ENCODE measurements at regions of chr1 and their contacts with region 1.

Region 1: DNA sequence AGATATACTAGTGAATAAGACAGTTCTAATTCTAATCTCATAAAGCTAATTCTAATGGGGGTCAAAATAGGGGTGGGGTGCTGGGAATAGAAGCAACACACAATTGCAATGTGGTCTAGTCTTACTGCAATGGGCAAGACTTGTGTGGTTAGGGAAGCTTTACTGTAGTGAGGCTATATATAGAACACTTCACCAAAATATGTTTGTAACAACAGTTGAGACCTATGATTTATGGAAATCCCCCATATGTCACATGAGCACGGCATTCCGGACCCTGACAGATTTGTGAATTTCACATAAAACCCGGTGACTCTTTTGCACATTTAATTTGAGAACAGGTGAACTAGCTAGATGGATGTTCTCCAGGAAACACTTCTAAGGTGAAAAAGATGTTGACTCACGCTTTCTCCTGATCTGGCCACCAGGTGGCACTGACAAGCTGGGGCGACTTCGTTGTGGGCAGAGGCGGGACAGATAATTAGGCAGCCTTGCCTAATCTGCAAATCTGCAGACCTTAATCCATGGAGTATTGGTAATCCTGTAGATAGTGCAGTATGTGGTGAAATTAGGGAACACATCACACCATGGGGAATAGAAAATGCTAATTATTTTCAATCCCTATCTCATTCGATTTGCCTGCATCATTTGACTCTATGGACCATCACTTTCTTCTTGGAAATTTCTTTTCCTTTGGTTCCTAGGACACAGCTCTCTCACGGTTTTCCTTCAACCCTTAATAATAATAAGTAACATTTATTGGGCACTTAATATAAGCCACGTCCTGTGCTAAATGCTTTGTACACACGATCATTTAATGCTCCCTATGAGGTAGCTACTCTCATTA is 37.7 kb downstream of the KIAA0040 start:
- DNase-seq: peak; percentile 24
- ATAC-seq: peak; percentile 49
- H3K4me3 ChIP-seq: no peak overlapping the region
- H3K27ac ChIP-seq: no peak overlapping the region
- H3K4me1 ChIP-seq: no peaks in the 10 kb centered on the region
- H3K27me3 ChIP-seq: peaks cover 0 to 3% of the 10 kb centered on the region in 2 experiments; a peak in 1 of 5 replicates
- CTCF ChIP-seq: peak; percentile 82
- EP300 ChIP-seq: no peak
- POLR2A ChIP-seq: no peak
- RAD21 ChIP-seq: peak; percentile 55; the same call in 1 of the 2 replicates

Region 2: GRCh38 chr1:175192630-175193526 is 38.0 kb after region 1 on chr1 and contains the start of gene KIAA0040:
- CTCF ChIA-PET with region 1: no interaction called
- POLR2A ChIA-PET with region 1: no interaction called
- in situ Hi-C with region 1: no loop called
- intact Hi-C with region 1: loop called (anchors 5 kb)
- DNase-seq: peak; percentile 65
- ATAC-seq: peak; percentile 93
- H3K4me3 ChIP-seq: peak within 1 kb of the TSS; percentile 46 to 66 (median 59); a peak in 5 of 6 replicates
- H3K27ac ChIP-seq: no peak within 1 kb of the TSS
- H3K4me1 ChIP-seq: peaks cover 21% of the 10 kb centered on the region
- H3K27me3 ChIP-seq: peaks cover 0 to 9% of the 10 kb centered on the region in 2 experiments; a peak in 2 of 5 replicates
- CTCF ChIP-seq: peak; percentile 30
- EP300 ChIP-seq: no peak
- POLR2A ChIP-seq: no peak
- RAD21 ChIP-seq: no peak
- total RNA-seq, gene KIAA0040: 0.24 and 0.63 TPM in 2 replicates

Region 3: DNA sequence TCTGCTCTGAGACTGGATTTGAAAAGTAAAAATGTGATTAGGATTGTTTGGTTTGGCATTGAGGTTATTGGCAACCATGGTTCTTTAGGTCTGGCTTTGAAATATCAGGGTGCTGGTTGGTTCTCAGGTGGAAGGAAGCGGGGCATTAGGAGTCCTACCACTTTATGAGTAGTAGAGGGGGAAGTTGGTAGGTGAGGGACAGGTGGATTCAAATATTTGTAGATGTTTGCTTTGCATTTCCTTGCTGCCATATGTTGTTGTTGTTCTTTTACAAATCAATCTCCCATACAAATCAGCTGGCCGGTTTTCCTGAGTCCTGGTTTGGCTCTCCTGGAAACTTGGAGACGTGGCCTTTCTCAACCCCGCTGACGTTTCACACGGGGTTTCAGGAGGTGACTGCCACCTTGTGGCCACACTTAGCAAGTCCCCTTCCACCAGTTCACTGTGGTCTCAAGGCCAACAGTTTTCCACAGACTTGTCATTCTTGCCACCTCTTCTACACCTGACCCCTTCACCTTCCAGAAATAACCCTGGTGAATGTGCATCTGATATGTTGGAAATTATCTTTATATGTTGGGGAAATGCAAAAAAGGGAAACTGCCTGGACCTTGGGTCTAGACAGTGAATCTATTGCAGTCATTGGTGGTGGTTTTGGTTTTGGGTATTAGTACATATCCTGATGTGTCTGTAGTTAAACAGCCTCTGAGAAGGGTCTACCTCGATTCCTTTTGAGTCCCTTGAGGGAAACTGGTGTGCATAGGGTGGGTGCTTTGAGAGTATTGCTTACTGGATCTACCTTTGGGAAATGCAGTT is 164.8 kb after region 1 on chr1:
- CTCF ChIA-PET with region 1: interaction called, 47 read pairs
- POLR2A ChIA-PET with region 1: no interaction called
- in situ Hi-C with region 1: loop called (anchors 5 kb)
- intact Hi-C with region 1: loop called (anchors 1 kb)
- DNase-seq: peak; percentile 52
- ATAC-seq: peak; percentile 95
- H3K4me3 ChIP-seq: no peak overlapping the region
- H3K27ac ChIP-seq: no peak overlapping the region
- H3K4me1 ChIP-seq: no peaks in the 10 kb centered on the region
- H3K27me3 ChIP-seq: peaks cover 1 to 7% of the 10 kb centered on the region in 2 experiments; a peak in 2 of 5 replicates
- CTCF ChIP-seq: peak; percentile 89
- EP300 ChIP-seq: no peak
- POLR2A ChIP-seq: no peak
- RAD21 ChIP-seq: peak; percentile 73

Region 4: GRCh38 chr1:175514387-175514953 is 359.6 kb after region 1 on chr1:
- CTCF ChIA-PET with region 1: no interaction called
- POLR2A ChIA-PET with region 1: no interaction called
- in situ Hi-C with region 1: no loop called
- intact Hi-C with region 1: no loop called
- DNase-seq: no peak
- ATAC-seq: no peak
- H3K4me3 ChIP-seq: no peak overlapping the region
- H3K27ac ChIP-seq: no peak overlapping the region
- H3K4me1 ChIP-seq: no peaks in the 10 kb centered on the region
- H3K27me3 ChIP-seq: no peaks in the 10 kb centered on the region
- CTCF ChIP-seq: no peak
- EP300 ChIP-seq: no peak
- POLR2A ChIP-seq: no peak
- RAD21 ChIP-seq: no peak

Region 5: DNA sequence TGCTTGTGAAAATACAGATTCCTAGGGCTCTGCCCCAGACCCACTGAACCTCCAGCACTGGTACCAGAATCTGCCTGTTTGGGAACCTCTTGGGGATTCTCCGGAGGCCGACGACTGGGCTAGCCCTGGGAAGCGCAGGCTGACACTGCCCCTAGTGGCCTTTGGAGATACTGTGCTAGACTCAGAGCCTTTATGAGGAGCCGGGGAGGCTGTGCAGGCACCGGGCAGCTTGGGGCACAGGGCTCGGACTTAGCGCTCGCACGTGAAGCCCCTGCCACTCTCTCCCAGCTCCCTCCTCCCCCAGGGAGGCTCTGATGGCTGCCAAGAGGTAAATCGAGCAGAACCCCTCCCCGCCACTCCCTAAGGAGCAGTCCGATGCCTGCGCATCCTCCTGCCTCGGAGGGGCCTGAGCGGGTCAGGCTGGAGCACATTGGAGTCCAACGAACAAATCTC is 733.2 kb after region 1 on chr1:
- CTCF ChIA-PET with region 1: interaction called, 3 read pairs
- POLR2A ChIA-PET with region 1: no interaction called
- in situ Hi-C with region 1: loop called (anchors 25 kb)
- intact Hi-C with region 1: no loop called
- DNase-seq: peak; percentile 45
- ATAC-seq: peak; percentile 99
- H3K4me3 ChIP-seq: no peak overlapping the region
- H3K27ac ChIP-seq: no peak overlapping the region
- H3K4me1 ChIP-seq: no peaks in the 10 kb centered on the region
- H3K27me3 ChIP-seq: peaks cover 2 to 4% of the 10 kb centered on the region in 2 experiments; a peak in 1 of 5 replicates
- CTCF ChIP-seq: peak; percentile 85
- EP300 ChIP-seq: no peak
- POLR2A ChIP-seq: no peak
- RAD21 ChIP-seq: peak; percentile 68

Region 6: DNA sequence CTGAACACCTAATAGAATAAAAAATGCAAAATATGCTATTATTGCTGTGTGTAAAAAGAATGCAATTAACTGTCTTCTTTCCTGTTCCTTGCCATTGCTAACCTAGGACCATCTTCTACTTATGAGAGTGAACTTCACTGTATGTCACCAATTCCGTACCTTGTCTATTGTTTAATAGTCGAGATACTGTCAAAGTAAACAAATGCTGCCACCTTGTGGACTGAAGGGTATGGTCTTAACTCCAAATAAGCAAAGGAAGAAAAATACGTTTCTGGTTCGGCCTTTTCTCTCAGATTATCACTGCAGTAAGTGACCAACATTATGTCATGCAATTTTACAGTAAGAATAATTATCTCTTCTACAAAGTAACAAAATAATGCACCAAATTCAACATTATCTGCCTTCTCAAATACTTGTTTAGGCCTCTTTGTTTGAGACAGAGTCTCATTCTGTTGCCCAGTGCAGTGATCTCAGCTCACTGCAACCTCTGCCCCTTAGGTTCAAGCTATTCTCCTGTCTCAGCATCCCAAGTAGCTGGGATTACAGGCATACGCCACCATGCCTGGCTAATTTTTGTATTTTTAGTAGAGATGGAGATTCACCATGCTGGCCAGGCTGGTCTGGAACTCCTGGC is 918.8 kb after region 1 on chr1:
- CTCF ChIA-PET with region 1: no interaction called
- POLR2A ChIA-PET with region 1: no interaction called
- in situ Hi-C with region 1: loop called (anchors 25 kb)
- intact Hi-C with region 1: loop called (anchors 10 kb)
- DNase-seq: peak; percentile 57
- ATAC-seq: peak; percentile 80
- H3K4me3 ChIP-seq: no peak overlapping the region
- H3K27ac ChIP-seq: no peak overlapping the region
- H3K4me1 ChIP-seq: no peaks in the 10 kb centered on the region
- H3K27me3 ChIP-seq: no peaks in the 10 kb centered on the region
- CTCF ChIP-seq: peak; percentile 81
- EP300 ChIP-seq: no peak
- POLR2A ChIP-seq: no peak
- RAD21 ChIP-seq: peak; percentile 16; the same call in 1 of the 2 replicates

Region 7: DNA sequence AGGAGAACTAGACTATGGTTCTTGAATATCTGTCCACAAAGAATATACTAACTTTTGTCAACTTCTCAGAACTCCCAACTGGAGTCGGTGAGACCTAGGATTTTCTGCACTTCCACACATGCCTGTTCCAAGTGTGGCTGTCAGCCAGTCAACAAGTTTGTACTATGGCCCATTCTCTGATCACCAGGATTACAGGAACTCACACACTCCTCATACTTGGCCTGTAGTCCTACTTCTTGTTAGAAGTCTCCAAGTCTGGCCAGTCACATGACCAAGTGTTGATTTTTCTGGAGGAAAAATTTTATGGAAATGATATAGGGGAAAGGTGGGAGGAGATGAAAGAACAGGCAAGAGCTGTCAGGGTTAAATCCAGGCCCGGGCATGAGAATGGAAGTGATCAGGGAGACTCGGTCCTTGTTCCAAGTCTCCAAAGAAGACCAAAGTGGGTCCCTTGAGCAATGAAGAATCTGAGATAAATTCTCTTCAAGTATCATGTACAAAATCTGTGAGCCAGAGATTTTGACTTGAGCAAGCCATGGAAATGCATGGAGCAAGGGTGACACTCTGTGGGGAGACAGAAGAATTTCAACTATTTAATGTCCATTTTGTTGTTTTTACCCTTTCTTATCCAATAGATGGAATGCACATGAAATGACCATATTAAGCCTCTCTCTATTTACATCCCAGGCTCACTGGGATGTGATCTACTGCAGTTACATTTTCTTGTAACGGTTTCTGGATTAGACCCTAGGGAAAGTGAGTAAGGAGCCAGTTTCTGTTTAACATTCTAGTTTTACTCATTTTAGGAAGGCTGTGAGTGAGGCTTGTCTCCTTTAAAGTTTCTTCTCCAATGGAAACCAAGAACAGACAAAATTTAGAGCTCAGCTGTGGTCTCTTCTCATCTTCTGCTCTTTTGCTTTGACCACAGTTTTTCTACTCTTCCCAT is 1688.8 kb after region 1 on chr1:
- CTCF ChIA-PET with region 1: no interaction called
- POLR2A ChIA-PET with region 1: no interaction called
- in situ Hi-C with region 1: loop called (anchors 25 kb)
- intact Hi-C with region 1: no loop called
- DNase-seq: peak; percentile 7
- ATAC-seq: no peak; the same call in 2 of the 3 replicates
- H3K4me3 ChIP-seq: no peak overlapping the region
- H3K27ac ChIP-seq: no peak overlapping the region
- H3K4me1 ChIP-seq: no peaks in the 10 kb centered on the region
- H3K27me3 ChIP-seq: no peaks in the 10 kb centered on the region
- CTCF ChIP-seq: peak; percentile 50
- EP300 ChIP-seq: no peak
- POLR2A ChIP-seq: no peak
- RAD21 ChIP-seq: no peak

Measured in HepG2 (cell line).